ENCODE measurements at regions of chr3 and their contacts with region 1.

Region 1: DNA sequence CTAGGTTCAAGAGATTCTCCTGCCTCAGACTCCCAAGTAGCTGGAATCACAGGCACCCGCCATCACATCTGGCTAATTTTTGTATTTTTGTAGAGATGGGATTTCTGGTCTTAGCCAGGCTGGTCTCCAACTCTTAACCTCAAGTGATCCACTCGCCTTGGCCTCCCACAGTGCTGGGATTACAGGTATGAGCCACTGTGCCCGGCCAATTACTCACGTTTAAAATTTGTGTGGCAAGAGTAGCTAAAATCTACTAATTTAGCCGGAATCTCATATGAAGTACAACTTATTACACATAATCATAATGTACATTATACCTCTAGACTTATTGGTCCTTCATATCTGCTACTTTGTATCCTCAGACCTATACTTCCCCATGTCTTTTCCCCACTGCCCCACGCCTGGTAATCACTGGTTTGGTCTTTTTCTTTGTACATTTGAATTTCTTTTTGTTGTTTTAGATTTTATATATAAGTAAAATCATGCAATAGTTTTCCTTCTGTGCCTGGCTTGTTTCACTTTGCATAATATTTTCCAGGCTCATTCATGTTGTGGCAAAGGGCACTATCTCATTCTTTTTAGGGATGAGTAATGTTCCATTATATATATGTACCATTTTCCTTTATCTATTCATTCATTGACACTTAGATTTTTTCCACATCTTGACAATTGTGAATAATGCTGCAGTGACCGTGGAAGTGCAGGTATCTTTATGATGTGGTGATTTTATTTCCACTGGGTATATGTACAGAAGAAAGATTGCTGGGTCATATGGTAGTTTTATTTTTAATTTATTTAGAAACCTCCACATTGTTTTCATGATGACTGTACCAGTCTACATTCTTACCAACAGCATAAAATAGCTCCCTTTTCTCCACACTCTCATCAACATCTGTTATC is 605.0 kb upstream of the CBLB start:
- DNase-seq: no peak
- ATAC-seq: no peak
- H3K4me3 ChIP-seq: no peak overlapping the region
- H3K4me3 Mint-ChIP-seq: no peak overlapping the region
- H3K27ac ChIP-seq: no peak overlapping the region
- H3K27ac Mint-ChIP-seq: no peak overlapping the region
- H3K4me1 ChIP-seq: no peaks in the 10 kb centered on the region
- H3K4me1 Mint-ChIP-seq: no peaks in the 10 kb centered on the region
- H3K27me3 ChIP-seq: no peaks in the 10 kb centered on the region
- H3K27me3 Mint-ChIP-seq: no peaks in the 10 kb centered on the region
- CTCF ChIP-seq: no peak

Region 2: GRCh38 chr3:106281220-106281619 is 192.6 kb before region 1 on chr3:
- CTCF ChIA-PET with region 1: no interaction called
- POLR2A ChIA-PET with region 1: no interaction called
- intact Hi-C with region 1: no loop called
- DNase-seq: no peak
- ATAC-seq: no peak
- H3K4me3 ChIP-seq: no peak overlapping the region
- H3K4me3 Mint-ChIP-seq: no peak overlapping the region
- H3K27ac ChIP-seq: no peak overlapping the region
- H3K27ac Mint-ChIP-seq: no peak overlapping the region
- H3K4me1 ChIP-seq: peaks cover 0 to 12% of the 10 kb centered on the region in 2 donors
- H3K4me1 Mint-ChIP-seq: peaks cover 17% of the 10 kb centered on the region
- H3K27me3 ChIP-seq: no peaks in the 10 kb centered on the region
- H3K27me3 Mint-ChIP-seq: no peaks in the 10 kb centered on the region
- CTCF ChIP-seq: no peak

Region 3: GRCh38 chr3:106299300-106300098 is 174.3 kb before region 1 on chr3:
- CTCF ChIA-PET with region 1: no interaction called
- POLR2A ChIA-PET with region 1: no interaction called
- intact Hi-C with region 1: loop called (anchors 10 kb)
- DNase-seq: no peak
- ATAC-seq: no peak
- H3K4me3 ChIP-seq: no peak overlapping the region
- H3K4me3 Mint-ChIP-seq: no peak overlapping the region
- H3K27ac ChIP-seq: no peak overlapping the region
- H3K27ac Mint-ChIP-seq: no peak overlapping the region
- H3K4me1 ChIP-seq: peaks cover 9% of the 10 kb centered on the region in 2 donors
- H3K4me1 Mint-ChIP-seq: peaks cover 20% of the 10 kb centered on the region
- H3K27me3 ChIP-seq: no peaks in the 10 kb centered on the region
- H3K27me3 Mint-ChIP-seq: no peaks in the 10 kb centered on the region
- CTCF ChIP-seq: no peak

Measured in B cell (primary cell).